ENCODE measurements at regions of chr5 and their contacts with region 1.

Region 1: DNA sequence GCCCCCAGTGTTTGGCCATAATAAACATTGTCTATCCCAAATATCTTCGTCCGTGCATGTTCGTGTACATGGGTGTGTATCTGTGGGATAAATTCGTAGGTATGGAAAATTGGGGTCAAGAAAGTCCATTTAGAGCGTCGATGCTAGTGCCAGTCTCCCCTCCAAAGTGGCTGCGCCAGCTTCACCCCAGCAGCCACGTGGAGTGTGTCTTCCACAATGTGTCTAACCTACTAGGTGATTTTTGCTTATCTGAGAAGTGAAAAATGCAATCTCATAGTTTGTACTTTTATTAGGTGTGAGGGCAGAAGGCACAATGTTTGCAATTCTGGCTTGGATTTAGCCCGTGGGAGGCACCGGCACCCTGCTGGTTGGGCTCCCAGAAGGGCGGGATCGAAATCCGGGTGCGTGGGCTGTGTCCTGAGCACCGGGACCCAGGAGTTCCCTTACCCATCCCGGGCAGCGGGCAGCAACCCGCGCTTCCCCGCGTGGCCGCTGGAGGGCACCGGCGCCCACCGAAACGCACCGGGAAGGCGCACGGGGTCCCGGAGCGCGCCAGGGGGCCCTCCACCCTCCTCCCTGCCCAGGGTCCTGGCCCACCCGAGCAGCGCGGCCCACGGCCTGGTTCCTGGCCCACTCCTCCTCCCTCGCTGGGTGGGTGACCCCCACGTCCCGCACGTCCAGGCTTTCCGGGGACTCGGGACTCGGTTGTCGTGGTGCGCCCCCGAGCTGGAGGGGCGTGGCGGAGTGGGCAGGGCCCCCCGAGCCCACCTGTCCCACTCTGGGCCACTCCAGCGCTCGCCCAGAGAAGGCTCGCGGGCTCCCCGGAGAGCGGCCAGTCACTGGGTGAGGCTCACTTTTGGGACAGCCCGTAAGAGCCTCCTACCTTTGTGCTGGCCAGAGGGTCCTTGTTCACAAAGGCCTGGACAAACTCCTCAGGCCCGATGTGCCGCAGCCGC is 55.4 kb upstream of the RNF130 start:
- DNase-seq: no peak
- H3K4me3 ChIP-seq: no peak overlapping the region
- H3K27ac ChIP-seq: no peak overlapping the region
- H3K4me1 ChIP-seq: peaks cover 4% of the 10 kb centered on the region
- H3K27me3 ChIP-seq: no peaks in the 10 kb centered on the region
- CTCF ChIP-seq: peak; percentile 60 to 82

Region 2: GRCh38 chr5:179878222-179879009 is 248.6 kb before region 1 on chr5:
- CTCF ChIA-PET with region 1: no interaction called
- dilution Hi-C with region 1: no loop called
- in situ Hi-C with region 1: no loop called
- intact Hi-C with region 1: no loop called
- DNase-seq: no peak
- H3K4me3 ChIP-seq: no peak overlapping the region
- H3K27ac ChIP-seq: no peak overlapping the region
- H3K4me1 ChIP-seq: no peaks in the 10 kb centered on the region
- H3K27me3 ChIP-seq: no peaks in the 10 kb centered on the region
- CTCF ChIP-seq: no peak

Region 3: GRCh38 chr5:180201051-180201987 is 74.3 kb after region 1 on chr5:
- CTCF ChIA-PET with region 1: no interaction called
- dilution Hi-C with region 1: loop called (anchors 5 kb)
- in situ Hi-C with region 1: no loop called
- intact Hi-C with region 1: no loop called
- DNase-seq: no peak
- H3K4me3 ChIP-seq: no peak overlapping the region
- H3K27ac ChIP-seq: no peak overlapping the region
- H3K4me1 ChIP-seq: no peaks in the 10 kb centered on the region
- H3K27me3 ChIP-seq: no peaks in the 10 kb centered on the region
- CTCF ChIP-seq: peak in 1 of 2 donors; percentile 30

Region 4: GRCh38 chr5:180315762-180316212 is 188.8 kb after region 1 on chr5:
- CTCF ChIA-PET with region 1: no interaction called
- dilution Hi-C with region 1: no loop called
- in situ Hi-C with region 1: no loop called
- intact Hi-C with region 1: loop called (anchors 1 kb)
- DNase-seq: peak; percentile 12
- H3K4me3 ChIP-seq: no peak overlapping the region
- H3K27ac ChIP-seq: no peak overlapping the region
- H3K4me1 ChIP-seq: no peaks in the 10 kb centered on the region
- H3K27me3 ChIP-seq: no peaks in the 10 kb centered on the region
- CTCF ChIP-seq: peak; percentile 62 to 86

Region 5: DNA sequence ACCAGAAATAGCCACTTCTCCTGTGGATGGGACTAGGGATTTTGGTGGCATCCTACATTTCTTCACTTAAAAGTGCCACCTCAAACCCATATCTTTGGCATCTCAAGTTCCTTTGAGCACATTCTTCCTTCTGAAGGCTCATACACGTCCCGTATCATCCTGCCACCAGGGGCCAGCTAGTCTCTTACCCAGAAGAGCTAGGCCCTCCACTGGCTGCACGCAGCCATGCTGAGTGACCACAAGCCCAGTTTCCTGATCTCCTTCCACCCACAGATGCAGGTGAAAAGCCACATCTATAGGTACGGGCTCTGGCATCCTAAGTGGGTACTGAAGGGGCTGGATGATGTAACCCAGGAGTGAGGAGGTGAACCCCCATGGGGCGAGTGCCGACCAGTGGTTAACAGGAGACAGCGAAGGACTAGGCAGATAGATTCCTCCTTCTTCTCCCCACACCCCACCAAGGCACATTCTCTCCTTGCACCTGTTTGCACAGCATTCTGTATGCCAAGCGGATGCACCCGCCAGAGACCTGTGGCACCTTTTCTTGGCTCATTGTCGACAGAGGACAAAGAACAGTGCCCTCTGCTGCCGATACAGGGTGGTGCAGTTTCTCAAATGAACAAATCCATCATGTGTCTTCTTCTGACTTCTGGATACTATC is 478.7 kb after region 1 on chr5:
- CTCF ChIA-PET with region 1: no interaction called
- dilution Hi-C with region 1: no loop called
- in situ Hi-C with region 1: no loop called
- intact Hi-C with region 1: loop called (anchors 5 kb)
- DNase-seq: peak; percentile 38
- H3K4me3 ChIP-seq: no peak overlapping the region
- H3K27ac ChIP-seq: no peak overlapping the region
- H3K4me1 ChIP-seq: no peaks in the 10 kb centered on the region
- H3K27me3 ChIP-seq: no peaks in the 10 kb centered on the region
- CTCF ChIP-seq: peak; percentile 81 to 82

Measured in mammary epithelial cell (primary cell).